ENCODE measurements at regions of chr7 and their contacts with region 1.

Region 1: GRCh38 chr7:156816943-156817572 is 75.9 kb downstream of the LMBR1 start:
- DNase-seq: no peak
- H3K4me3 Mint-ChIP-seq: no peak overlapping the region
- H3K27ac Mint-ChIP-seq: no peak overlapping the region
- H3K4me1 Mint-ChIP-seq: peaks cover 14% of the 10 kb centered on the region
- H3K27me3 Mint-ChIP-seq: no peaks in the 10 kb centered on the region

Region 2: DNA sequence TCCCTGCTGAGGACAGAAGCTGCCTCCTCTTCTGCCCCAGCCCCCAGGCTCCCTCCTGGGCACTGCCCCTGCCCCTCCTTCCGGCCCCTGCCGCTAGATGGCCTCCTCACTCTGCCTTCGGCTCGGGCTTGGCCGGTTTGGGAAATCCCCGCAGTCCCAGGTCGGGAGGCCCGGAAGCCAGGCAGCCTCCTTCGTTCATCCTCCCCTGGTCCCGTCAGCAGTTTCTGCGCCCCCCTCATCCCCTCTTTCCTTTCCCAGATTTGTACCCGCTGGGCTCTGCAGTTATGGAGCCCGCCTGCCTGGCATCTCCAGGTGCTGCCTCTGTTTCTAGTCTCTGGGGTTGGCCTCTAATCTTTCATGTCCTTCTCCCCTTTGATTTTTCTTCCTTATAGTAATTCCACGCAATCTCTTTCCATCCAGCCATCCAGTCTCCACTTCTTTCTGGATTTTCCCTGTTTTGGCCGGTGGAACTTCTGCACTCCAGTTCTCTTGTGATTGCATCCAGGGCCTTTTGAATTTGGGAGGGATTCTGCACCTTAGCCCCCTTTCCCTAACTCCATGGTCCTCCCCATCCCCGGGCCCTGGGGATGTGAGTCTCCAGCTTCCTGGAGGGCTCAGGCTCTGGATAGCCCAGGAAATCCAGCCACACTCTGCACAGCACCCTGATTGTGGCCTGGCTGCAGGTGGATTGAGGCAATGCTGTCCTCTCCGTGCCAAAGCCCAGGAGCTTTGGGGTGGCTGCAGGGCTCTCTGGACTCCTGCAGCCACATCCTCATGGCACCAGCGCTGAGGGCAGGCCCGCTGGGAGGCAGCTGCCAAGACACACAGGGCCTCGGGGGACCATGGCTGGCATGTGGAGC is 1001.5 kb before region 1 on chr7:
- intact Hi-C with region 1: loop called (anchors 5 kb)
- DNase-seq: peak; percentile 57
- H3K4me3 Mint-ChIP-seq: no peak overlapping the region
- H3K27ac Mint-ChIP-seq: no peak overlapping the region
- H3K4me1 Mint-ChIP-seq: peaks cover 16% of the 10 kb centered on the region
- H3K27me3 Mint-ChIP-seq: peaks cover 41% of the 10 kb centered on the region

Region 3: GRCh38 chr7:156473476-156474240 is 343.4 kb before region 1 on chr7:
- intact Hi-C with region 1: loop called (anchors 5 kb)
- DNase-seq: no peak
- H3K4me3 Mint-ChIP-seq: no peak overlapping the region
- H3K27ac Mint-ChIP-seq: no peak overlapping the region
- H3K4me1 Mint-ChIP-seq: no peaks in the 10 kb centered on the region
- H3K27me3 Mint-ChIP-seq: peaks cover 27% of the 10 kb centered on the region

Region 4: DNA sequence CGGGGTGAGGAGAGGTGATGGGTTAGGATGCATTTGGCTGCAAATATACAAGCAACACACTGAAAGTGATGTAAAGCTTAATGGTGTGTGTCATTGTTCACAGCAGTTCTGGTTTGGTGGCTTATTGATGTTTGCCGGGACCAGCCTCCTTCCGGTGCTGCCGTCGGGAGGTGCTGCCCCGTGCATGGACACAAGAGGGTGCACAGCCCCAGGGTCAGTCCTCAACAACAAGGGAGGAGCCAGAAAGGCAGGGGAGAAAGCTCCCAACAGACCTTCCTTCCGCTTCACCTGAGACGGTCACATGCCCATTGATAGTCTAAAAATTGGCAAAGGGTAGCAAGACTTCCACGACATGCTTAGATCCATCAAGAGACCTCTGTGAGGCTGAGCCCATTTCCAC is 167.0 kb before region 1 on chr7:
- intact Hi-C with region 1: loop called (anchors 1 kb)
- DNase-seq: no peak
- H3K4me3 Mint-ChIP-seq: no peak overlapping the region
- H3K27ac Mint-ChIP-seq: no peak overlapping the region
- H3K4me1 Mint-ChIP-seq: peaks cover 8% of the 10 kb centered on the region
- H3K27me3 Mint-ChIP-seq: peaks cover 6% of the 10 kb centered on the region

Region 5: DNA sequence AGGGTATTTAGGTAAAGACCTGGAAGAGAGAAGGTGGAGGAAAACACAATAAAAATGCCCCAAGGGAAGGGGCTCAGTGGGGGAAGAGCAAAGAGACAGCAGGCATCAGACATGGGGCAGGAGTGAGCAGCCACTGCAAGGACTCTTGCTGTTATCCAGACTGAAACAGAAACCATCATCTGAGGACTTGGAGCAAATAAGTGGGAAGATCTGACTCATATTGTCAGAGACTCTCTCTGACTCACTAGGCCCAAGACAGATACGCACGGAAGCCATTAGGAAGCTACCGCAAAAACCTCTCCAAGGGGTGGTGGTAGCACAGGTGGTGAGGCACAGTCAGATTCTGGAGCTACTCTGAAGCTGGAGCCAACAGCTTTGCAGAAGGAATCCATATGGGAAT is 65.7 kb before region 1 on chr7:
- intact Hi-C with region 1: loop called (anchors 5 kb)
- DNase-seq: peak; percentile 62
- H3K4me3 Mint-ChIP-seq: peak overlapping the region; percentile 24
- H3K27ac Mint-ChIP-seq: no peak overlapping the region
- H3K4me1 Mint-ChIP-seq: peaks cover 27% of the 10 kb centered on the region
- H3K27me3 Mint-ChIP-seq: no peaks in the 10 kb centered on the region

Region 6: GRCh38 chr7:156773966-156774365 is 43.1 kb before region 1 on chr7:
- intact Hi-C with region 1: loop called (anchors 5 kb)
- DNase-seq: no peak
- H3K4me3 Mint-ChIP-seq: no peak overlapping the region
- H3K27ac Mint-ChIP-seq: peak overlapping the region; percentile 73
- H3K4me1 Mint-ChIP-seq: peaks cover 61% of the 10 kb centered on the region
- H3K27me3 Mint-ChIP-seq: no peaks in the 10 kb centered on the region

Measured in activated T-helper 2 cell treated with anti-CD3 and anti-CD28 coated beads, Interferon-gamma antibody, Interleukin-2, Interleukin-4, amounts not matched to agents 10 μg/mL and 5 μg/mL and 100 μg/mL, durations not matched to agents 14 hours and 24 hours and 36 hours (primary cell).